ENCODE measurements at regions of chr1 and their contacts with region 1.

Region 1: DNA sequence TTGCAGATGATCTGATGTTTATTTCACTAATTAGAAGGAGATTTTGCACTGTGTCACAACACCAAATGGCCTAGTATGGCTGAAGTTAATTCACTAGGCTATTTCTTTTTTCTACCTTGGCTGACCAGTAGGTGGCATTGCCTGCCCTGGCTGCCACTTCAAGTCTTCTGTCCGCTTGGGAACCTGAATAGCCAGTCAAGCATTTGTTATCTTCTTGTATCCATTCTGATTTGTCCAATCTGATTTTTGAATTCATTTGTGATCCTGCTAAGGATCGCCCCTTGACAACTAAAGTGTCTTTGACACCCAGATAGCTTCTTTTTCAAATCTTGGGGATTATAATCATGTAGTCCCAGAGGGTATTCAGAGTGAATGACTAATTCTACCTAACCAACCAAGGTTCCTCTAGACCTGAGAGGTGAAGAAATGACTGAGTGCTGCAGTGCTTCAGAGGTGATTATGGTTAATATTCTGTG is 99.4 kb downstream of the GIPC2 start:
- DNase-seq: peak; percentile 53
- ATAC-seq: peak; percentile 38
- H3K4me3 Mint-ChIP-seq: no peak overlapping the region
- H3K27ac Mint-ChIP-seq: no peak overlapping the region
- H3K4me1 Mint-ChIP-seq: peaks cover 17% of the 10 kb centered on the region
- H3K27me3 Mint-ChIP-seq: peaks cover 15% of the 10 kb centered on the region

Region 2: DNA sequence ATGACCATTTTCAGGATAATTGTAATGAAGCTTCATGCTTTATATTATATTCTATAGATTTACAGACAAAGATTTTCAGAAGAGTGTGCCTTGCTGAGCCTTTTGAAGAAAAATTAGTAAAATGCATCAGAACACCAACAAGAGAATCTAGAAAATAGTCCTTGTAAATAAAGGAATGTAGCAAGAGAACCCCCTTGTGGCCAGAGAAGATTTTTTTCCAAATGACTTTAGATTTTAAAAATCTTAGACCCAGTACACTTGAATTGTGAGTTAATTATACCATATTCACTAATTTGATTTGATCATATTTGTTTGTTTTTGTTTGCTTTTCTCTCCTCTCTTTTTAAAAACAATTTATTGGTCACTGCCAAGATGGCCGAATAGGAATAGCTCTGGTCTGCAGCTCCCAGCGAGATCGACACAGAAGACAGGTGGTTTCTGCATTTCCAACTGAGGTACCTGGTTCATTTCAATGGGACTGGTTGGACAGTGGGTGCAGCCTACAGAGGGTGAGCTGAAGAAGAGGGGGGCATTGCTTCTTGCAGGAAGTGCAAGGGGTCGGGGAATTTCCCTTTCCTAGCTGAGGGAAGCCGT is 462.3 kb after region 1 on chr1:
- CTCF ChIA-PET with region 1: interaction called, 33 read pairs
- POLR2A ChIA-PET with region 1: no interaction called
- DNase-seq: no peak
- ATAC-seq: no peak
- H3K4me3 Mint-ChIP-seq: no peak overlapping the region
- H3K27ac Mint-ChIP-seq: no peak overlapping the region
- H3K4me1 Mint-ChIP-seq: no peaks in the 10 kb centered on the region
- H3K27me3 Mint-ChIP-seq: peaks cover 26% of the 10 kb centered on the region

Measured in activated CD8-positive, alpha-beta T cell treated with anti-CD3 and anti-CD28 coated beads, Interleukin-2, amount 10 ng/mL, durations not matched to agents 7 days and 5 days (primary cell).